PC-3 (cell line): ENCODE measurements at regions of chr5 and their contacts with region 1.

Region 1: GRCh38 chr5:45162974-45163373 is 354.2 kb downstream of the MRPS30 start:
- DNase-seq: no peak
- ATAC-seq: no peak
- H3K4me3 ChIP-seq: no peak overlapping the region
- H3K27ac ChIP-seq: no peak overlapping the region
- H3K4me1 ChIP-seq: no peaks in the 10 kb centered on the region
- H3K27me3 ChIP-seq: no peaks in the 10 kb centered on the region
- CTCF ChIP-seq: no peak

Region 2: GRCh38 chr5:45225571-45226031 is 62.6 kb after region 1 on chr5:
- CTCF ChIA-PET with region 1: no interaction called
- POLR2A ChIA-PET with region 1: interaction called, 10 read pairs
- intact Hi-C with region 1: no loop called
- DNase-seq: no peak
- ATAC-seq: peak; percentile 48; the same call in 1 of the 2 replicates
- H3K4me3 ChIP-seq: no peak overlapping the region
- H3K27ac ChIP-seq: no peak overlapping the region
- H3K4me1 ChIP-seq: no peaks in the 10 kb centered on the region
- H3K27me3 ChIP-seq: no peaks in the 10 kb centered on the region
- CTCF ChIP-seq: peak; percentile 41; the same call in 1 of the 2 replicates